ENCODE measurements at regions of chr6 and their contacts with region 1.

Region 1: GRCh38 chr6:37169496-37170272 is at the start of gene PIM1:
- DNase-seq: peak; percentile 98
- H3K4me3 Mint-ChIP-seq: peak within 1 kb of the TSS; percentile 98
- H3K27ac Mint-ChIP-seq: peak within 1 kb of the TSS; percentile 98
- H3K4me1 Mint-ChIP-seq: peaks cover 48% of the 10 kb centered on the region
- H3K27me3 Mint-ChIP-seq: no peaks in the 10 kb centered on the region
- total RNA-seq, gene PIM1: 153 and 158 TPM in 2 replicates

Region 2: GRCh38 chr6:36765594-36766398 is 403.9 kb before region 1 on chr6:
- intact Hi-C with region 1: loop called (anchors 5 kb)
- DNase-seq: peak; percentile 96
- H3K4me3 Mint-ChIP-seq: no peak overlapping the region
- H3K27ac Mint-ChIP-seq: no peak overlapping the region
- H3K4me1 Mint-ChIP-seq: peaks cover 30% of the 10 kb centered on the region
- H3K27me3 Mint-ChIP-seq: no peaks in the 10 kb centered on the region

Region 3: GRCh38 chr6:36985808-36986703 is 183.6 kb before region 1 on chr6 and contains the start of gene MTCH1:
- intact Hi-C with region 1: loop called (anchors 1 kb)
- DNase-seq: peak; percentile 97
- H3K4me3 Mint-ChIP-seq: no peak within 1 kb of the TSS
- H3K27ac Mint-ChIP-seq: peak within 1 kb of the TSS; percentile 97
- H3K4me1 Mint-ChIP-seq: peaks cover 19% of the 10 kb centered on the region
- H3K27me3 Mint-ChIP-seq: peaks cover 7% of the 10 kb centered on the region
- total RNA-seq, gene MTCH1: 119 TPM in 2 replicates

Region 4: DNA sequence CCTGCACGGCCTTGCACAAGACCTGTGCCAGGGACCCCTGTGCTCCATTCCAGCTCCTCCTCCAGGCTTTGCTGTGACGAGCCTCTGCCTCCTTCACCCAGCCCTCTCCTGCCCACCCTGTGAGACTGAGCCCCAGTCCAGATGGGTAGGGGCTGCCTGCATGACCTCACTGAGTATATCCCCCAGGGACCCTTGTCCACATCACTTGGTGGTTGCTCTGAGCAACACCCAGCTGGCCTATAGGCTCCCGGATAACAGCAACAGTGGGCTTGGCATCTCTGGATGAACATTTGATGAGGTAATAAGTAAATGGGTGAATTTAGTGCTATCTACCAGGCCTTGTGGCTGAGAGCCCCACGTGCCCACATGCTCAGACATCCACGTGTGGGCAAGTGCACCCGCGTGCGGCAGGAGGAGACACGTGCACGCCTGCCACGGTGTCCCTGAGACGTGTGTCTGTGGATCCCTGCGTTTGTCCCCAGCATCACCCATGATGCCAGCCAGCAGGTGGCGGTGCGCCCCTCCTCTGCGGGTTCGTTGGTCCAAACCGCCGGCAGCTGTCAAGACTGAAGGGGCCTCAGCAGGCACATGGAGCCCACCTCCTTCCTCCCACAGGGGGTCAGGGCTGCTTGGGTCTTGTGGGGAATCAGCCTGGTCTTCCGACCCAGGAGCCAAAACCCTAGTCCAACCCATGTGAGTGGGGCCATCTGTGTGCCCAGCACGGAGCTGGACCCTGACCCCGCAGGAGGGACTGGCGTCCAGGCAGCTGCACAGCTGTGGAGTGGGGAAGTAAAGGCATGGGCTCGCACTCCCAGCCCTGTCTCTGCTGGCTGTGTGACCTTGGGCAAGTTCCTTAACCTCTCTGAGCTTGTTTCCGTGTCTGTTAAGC is 118.3 kb before region 1 on chr6:
- intact Hi-C with region 1: loop called (anchors 1 kb)
- DNase-seq: peak; percentile 96
- H3K4me3 Mint-ChIP-seq: peak overlapping the region; percentile 88
- H3K27ac Mint-ChIP-seq: peak overlapping the region; percentile 98
- H3K4me1 Mint-ChIP-seq: peaks cover 57% of the 10 kb centered on the region
- H3K27me3 Mint-ChIP-seq: no peaks in the 10 kb centered on the region

Region 5: DNA sequence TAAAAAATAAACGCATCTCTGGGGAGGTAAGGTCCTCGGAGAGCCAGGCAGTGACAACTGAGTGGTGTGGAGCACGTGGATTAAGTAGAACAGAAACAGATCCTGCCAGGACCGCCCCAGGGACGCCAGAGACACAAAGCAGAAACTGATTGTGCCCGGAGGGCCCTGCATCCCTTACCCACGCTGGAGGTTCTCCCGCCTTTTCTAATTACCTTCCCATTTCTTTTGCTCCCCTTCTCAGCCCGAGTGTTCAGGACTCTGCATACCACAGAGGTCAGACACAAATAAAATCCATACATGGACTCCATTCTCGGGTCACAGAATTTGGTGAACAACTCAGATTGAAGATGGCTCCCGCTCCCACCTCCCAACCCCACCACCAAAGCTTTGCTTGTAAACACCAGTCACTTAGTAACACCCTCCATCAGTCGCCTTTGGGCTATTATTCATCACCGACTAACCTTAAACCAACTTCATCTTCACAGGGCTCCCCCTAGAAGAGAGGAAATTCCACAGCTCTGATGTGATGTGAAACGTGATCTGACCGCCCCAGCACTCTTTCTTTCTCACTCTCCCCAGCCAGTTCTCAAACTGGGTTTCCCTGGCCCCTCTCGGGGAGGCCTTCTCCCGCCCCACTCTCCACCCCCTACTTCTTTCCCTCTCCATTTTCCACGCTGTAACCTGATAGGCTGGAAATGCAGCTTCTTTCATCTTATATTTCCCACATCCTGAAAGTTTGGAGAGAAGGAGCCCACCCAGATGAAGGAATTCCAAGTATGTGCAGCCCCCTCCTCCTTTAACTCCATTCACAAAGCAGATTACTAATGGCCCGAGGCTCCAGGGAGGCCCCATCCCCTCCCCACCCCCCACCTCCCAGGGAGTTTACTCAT is 32.2 kb before region 1 on chr6:
- intact Hi-C with region 1: loop called (anchors 1 kb)
- DNase-seq: peak; percentile 62
- H3K4me3 Mint-ChIP-seq: peak overlapping the region; percentile 5
- H3K27ac Mint-ChIP-seq: peak overlapping the region; percentile 87
- H3K4me1 Mint-ChIP-seq: peaks cover 35% of the 10 kb centered on the region
- H3K27me3 Mint-ChIP-seq: no peaks in the 10 kb centered on the region

Region 6: DNA sequence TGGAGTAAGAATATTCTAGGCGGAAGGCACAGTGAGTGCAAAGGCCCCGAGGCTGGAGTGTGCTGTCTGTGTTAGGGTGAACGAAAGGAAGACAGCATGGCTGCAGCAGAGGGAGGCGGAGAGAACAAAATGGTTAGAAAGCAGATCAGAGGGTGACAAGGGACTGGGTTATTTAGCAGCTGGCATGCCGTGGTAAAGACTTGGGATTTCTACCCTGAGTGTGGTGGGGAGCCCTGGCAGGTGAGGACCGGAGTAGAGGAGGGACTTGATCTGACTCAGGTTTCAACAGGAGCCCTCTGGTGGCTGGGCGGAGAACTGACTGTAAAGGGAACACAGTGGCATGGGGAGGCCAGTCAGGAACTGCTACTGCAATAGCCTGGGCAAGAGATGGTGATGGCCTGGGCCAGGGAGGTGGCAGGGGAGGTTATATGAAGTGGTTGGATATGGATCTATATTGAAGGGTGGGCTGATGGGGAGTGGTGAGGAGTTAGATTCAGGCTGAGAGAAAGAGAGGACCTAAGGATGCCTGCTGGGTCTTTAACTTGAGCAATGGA is 38.3 kb after region 1 on chr6:
- intact Hi-C with region 1: loop called (anchors 1 kb)
- DNase-seq: peak; percentile 96
- H3K4me3 Mint-ChIP-seq: peak overlapping the region; percentile 57
- H3K27ac Mint-ChIP-seq: peak overlapping the region; percentile 86
- H3K4me1 Mint-ChIP-seq: peaks cover 58% of the 10 kb centered on the region
- H3K27me3 Mint-ChIP-seq: no peaks in the 10 kb centered on the region

Region 7: GRCh38 chr6:37285861-37286311 is 116.2 kb after region 1 on chr6:
- intact Hi-C with region 1: loop called (anchors 5 kb)
- DNase-seq: no peak
- H3K4me3 Mint-ChIP-seq: no peak overlapping the region
- H3K27ac Mint-ChIP-seq: peak overlapping the region; percentile 68
- H3K4me1 Mint-ChIP-seq: peaks cover 48% of the 10 kb centered on the region
- H3K27me3 Mint-ChIP-seq: no peaks in the 10 kb centered on the region

Measured in activated CD4-positive, alpha-beta T cell treated with anti-CD3 and anti-CD28 coated beads, Interleukin-2, amount 10 ng/mL, durations not matched to agents 24 days and 14 days (primary cell).